Transverse colon (tissue), 4 donors: ENCODE measurements at regions of chr1 and their contacts with region 1.

Region 1: GRCh38 chr1:182595641-182596240 is 6.7 kb upstream of the RNASEL start:
- DNase-seq: peak; percentile 79
- H3K4me3 ChIP-seq: no peak overlapping the region
- H3K27ac ChIP-seq: no peak overlapping the region
- H3K4me1 ChIP-seq: no peaks in the 10 kb centered on the region
- H3K27me3 ChIP-seq: no peaks in the 10 kb centered on the region
- CTCF ChIP-seq: peak; percentile 74 to 89 (median 83)
- EP300 ChIP-seq: no peak
- POLR2A ChIP-seq: no peak

Region 2: DNA sequence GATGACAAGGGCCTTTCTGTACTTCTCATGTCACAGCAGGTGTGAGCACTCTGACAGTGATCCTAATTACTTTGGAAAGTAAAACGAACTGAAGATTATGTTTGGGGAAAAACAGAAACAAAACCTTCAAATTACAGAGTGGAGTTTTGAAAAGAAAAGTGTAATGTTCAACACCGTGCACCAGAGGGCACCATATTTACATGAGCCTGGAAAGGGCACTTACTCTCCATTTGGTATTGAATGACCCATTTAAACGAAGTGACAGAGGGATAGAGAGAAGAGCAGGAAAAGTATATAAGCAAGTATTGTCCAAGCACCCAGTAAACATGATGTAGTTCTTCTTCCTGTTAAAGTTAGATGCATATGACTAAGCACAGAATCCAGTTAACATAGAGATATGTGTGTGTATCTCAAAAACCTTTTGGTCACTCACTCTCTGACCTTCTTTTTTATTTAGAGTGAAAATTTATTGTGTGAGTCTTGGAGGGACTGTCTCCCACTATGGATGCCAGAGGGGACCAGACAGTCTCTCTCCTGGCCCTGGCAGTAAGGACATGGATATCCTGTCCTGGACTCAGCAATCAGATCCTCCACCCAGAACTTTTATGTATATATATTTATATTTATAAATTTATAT is 149.6 kb before region 1 on chr1:
- in situ Hi-C with region 1: loop called in 2 of 4 experiments (anchors 10 kb)
- intact Hi-C with region 1: no loop called
- DNase-seq: peak; percentile 16
- H3K4me3 ChIP-seq: no peak overlapping the region
- H3K27ac ChIP-seq: no peak overlapping the region
- H3K4me1 ChIP-seq: peaks cover 0 to 3% (median 1%) of the 10 kb centered on the region in 4 donors
- H3K27me3 ChIP-seq: no peaks in the 10 kb centered on the region
- CTCF ChIP-seq: peak; percentile 60 to 73 (median 64)
- EP300 ChIP-seq: no peak
- POLR2A ChIP-seq: no peak

Region 3: DNA sequence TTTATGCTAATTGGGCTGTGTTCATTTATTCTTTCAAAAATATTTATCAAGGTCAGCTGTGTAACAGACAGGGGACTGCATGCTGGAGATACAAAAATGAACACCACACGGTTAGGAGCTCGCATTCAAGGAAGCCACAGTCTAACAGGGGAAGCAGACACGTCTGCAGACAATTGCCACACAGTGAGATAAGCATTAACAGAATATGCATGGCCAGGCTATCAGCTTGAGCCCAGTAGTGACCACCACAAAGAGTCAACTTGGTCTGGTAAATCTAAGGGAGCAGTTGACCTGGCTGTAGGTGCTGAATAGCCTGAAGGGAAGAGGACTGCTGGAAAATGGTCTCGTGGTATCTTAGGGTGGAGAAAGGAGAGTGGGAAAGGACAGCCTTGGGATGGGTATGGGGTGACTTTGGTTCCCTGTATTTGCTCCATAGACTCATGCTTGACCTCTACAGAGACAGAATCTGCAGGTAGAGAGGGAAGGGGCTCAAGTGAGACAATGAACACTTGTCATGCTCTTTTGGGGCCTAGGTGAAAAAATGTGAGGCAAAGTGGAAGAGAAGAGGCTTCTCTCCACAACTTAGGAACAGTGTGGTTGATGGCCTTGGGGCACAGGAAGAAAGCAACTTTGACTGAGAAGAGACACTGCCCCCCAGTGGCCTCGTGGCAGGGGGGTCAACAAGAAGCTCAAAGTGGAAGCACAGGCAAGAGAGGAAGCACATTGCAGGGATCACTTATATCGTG is 186.3 kb after region 1 on chr1:
- in situ Hi-C with region 1: loop called (anchors 5 kb)
- intact Hi-C with region 1: loop called (anchors 2 kb)
- DNase-seq: peak; percentile 66
- H3K4me3 ChIP-seq: no peak overlapping the region
- H3K27ac ChIP-seq: no peak overlapping the region
- H3K4me1 ChIP-seq: no peaks in the 10 kb centered on the region
- H3K27me3 ChIP-seq: no peaks in the 10 kb centered on the region
- CTCF ChIP-seq: peak; percentile 40 to 53 (median 49)
- EP300 ChIP-seq: no peak
- POLR2A ChIP-seq: no peak